Posterior vena cava (tissue), 2 donors: ENCODE measurements at regions of chr1 and their contacts with region 1.

Region 1: DNA sequence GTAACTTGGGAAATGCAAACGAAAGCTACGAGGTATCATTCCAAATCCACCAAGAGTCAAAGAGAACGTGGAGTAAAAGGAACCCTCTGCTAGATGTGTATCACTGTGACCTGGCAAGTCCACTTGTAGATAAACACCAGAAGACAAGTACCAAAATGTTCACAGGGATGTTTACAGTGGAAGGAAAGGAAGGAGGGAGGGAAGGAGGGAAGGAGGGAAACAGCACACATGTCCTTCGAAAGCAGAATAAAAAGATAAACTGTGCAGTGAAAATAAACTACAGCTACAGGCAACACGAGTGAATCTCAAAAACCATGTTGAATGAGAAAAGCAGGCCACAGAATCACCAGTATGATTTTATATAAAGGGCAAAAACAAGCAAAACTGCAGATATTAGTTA is 59.9 kb downstream of the TP53BP2 start:
- DNase-seq: no peak

Region 2: GRCh38 chr1:223810586-223810985 is 24.8 kb after region 1 on chr1:
- intact Hi-C with region 1: loop called in 1 of 2 experiments (anchors 1 kb)
- DNase-seq: no peak